KBM-7 (cell line): ENCODE measurements at regions of chr3 and their contacts with region 1.

Region 1: GRCh38 chr3:98817547-98818041 is 54.5 kb downstream of the ST3GAL6 start:
- DNase-seq: peak; percentile 79

Region 2: DNA sequence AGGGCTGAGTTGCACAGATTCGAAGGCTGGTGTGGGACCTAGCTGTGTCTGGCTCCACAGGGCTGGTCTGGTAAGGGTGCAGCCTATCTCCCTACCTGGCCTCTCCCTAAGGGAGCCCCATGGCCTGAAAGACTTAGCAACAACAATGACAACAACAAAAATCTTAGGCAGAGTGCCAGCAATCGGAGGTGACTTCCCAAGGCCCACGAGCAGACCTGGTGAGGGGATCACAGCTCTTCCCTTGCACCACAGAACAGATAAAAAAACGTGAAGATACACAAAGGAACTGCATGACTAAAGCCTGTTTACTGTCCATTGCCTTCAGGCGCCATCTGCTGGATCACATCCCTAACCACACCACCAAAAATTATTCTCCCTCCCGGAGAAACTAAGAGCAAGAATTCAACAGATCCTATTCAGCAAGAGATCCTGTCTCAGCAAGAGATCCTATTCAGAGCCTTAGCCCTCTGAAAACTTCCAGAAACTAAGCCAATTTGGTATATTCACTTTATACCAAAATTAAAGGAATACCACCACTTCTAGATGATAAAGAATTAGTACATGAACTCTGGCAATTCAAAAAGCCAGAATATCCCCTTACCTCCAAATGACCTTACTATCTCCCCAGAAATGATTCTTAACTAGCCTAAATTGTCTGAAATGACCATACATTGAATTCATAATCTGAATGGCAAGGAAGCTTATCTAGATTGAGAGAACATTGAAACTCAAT is 488.0 kb before region 1 on chr3:
- in situ Hi-C with region 1: loop called (anchors 25 kb)
- DNase-seq: peak; percentile 72

Region 3: GRCh38 chr3:98445949-98446406 is 371.6 kb before region 1 on chr3:
- in situ Hi-C with region 1: no loop called
- DNase-seq: no peak

Region 4: GRCh38 chr3:98563661-98564281 is 253.8 kb before region 1 on chr3:
- in situ Hi-C with region 1: no loop called
- DNase-seq: no peak

Region 5: GRCh38 chr3:98593046-98593936 is 224.3 kb before region 1 on chr3 and contains the start of gene CPOX:
- in situ Hi-C with region 1: loop called (anchors 5 kb)
- DNase-seq: peak; percentile 95

Region 6: GRCh38 chr3:98994128-98994762 is 176.7 kb after region 1 on chr3:
- in situ Hi-C with region 1: loop called (anchors 25 kb)
- DNase-seq: peak; percentile 43

Region 7: DNA sequence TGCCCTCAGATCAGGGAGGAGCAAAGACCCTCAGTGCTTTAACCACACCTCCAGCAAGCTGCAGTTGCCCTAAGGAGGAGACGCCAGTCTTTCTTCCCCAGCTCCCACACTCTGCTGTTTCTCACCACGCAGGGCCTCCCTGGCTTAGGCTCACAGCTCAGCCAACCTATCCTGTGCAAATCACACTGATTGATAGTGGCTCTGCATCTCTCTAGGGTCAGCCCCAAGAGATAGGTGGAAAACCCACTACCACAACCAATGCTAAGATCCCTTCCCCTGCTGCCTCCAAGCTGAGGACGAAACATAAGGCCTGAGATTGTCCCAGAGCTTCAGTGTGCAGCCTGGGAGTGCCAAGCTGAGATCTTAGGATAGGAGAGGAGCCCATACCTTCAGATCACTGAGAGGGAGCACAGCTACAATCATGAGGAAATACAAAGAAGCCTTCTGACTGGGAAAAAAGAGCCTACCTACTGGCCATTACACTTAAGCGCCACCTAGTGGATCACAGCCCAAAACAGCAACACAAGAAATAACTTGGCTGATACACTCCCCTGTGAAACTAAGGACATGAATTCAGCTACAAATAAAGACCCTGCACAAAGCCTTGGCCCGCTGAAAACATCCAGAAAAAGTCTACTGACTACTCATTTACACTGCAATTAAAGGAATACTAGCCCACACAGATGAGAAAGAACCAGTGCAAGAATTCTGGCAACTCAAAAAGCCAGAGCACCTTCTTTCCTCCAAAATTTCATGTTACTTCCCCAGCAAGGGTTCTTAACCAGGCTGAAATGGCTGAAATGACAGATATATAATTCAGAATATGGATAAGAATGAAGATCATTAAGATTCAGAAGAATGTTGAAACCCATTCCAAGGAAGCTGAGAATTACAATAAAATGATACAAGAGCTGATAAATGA is 355.4 kb after region 1 on chr3:
- in situ Hi-C with region 1: loop called (anchors 25 kb)
- DNase-seq: peak; percentile 56